ENCODE measurements at regions of chr16 and their contacts with region 1.

Region 1: DNA sequence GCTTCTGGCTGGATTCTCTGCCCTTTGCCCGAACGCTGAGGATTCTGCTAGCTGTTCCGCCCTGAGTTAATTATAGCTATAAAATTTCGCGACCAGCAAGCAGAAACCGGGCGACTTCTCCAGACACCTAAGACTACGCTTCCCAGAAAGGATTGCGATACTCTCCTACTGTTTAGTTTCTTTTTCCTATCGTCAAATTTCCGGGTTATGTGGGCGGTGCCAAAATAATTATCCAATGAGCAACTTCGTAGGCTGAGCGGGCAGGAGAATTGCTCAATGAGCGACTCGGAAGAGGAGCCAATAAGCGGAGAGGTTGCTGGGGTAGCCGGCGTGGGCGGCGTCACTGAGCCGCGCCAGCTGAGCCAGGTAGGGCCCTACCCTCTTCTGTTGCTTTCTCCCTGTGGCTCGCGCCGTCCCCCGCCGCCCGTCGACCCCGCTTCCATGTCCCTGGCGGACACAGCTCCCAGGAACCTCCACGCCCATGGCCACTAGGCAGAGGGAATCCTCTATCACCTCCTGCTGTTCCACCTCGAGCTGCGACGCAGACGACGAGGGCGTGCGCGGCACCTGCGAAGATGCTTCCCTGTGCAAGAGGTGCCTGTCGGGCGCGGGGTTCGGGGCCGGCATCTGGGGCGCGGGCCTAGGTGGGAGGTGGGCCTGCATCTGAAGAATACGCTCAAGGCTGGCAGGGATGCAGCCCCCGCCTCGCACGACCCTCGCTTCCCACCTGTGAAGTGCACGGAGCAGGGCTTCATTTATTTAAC is at the start of gene LCMT1:
- DNase-seq: peak; percentile 91
- ATAC-seq: peak; percentile 88
- total RNA-seq, gene LCMT1: 41.7 TPM

Region 2: DNA sequence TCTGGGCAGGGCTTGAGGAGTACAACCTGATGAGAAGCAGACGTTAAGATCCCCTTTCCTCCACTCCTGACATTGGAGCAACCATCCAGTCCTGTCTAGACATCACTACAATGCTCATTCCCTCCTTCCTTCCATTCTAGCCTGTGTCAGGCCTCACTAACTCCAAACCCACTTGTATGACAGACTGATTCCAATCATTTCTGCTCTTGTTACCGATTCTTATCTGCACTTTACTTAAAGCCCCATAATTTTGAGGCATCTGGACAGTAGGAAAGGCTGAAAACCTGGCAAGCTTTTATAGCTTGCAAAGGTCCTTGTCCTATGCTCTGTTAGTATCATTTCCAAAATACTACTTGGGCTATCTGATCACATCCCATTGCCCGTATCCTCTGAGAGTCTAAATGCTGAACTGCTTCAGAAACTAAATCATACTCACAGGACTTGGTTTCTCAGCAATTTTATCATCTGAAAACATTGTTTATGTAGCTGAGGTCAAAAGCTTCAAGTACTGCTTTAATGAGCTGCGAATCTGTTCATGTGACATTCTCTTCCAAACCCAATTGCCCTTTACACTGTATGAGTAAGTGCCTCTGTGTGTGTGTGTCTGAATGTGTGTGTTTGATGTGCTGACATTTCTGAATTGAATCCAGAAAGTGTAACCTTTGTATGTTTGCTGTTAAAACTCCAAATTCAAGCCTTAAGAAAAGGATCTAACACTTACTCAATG is 912.6 kb before region 1 on chr16:
- intact Hi-C with region 1: no loop called
- DNase-seq: no peak
- ATAC-seq: no peak

Region 3: GRCh38 chr16:25066747-25067631 is 44.6 kb before region 1 on chr16:
- intact Hi-C with region 1: loop called (anchors 10 kb)
- DNase-seq: peak; percentile 92
- ATAC-seq: peak; percentile 96

Region 4: GRCh38 chr16:25340973-25341372 is 229.4 kb after region 1 on chr16:
- intact Hi-C with region 1: no loop called
- DNase-seq: no peak
- ATAC-seq: no peak

Measured in left ventricle myocardium superior (tissue), 1 donor.